A673 (cell line): ENCODE measurements at regions of chr1 and their contacts with region 1.

Region 1: GRCh38 chr1:114152508-114153260 is 985 bp downstream of the SYT6 start:
- DNase-seq: peak; percentile 74
- H3K4me3 ChIP-seq: peak overlapping the region; percentile 82
- H3K27ac ChIP-seq: peak overlapping the region; percentile 92
- H3K4me1 ChIP-seq: peaks cover 36% of the 10 kb centered on the region
- H3K27me3 ChIP-seq: no peaks in the 10 kb centered on the region
- CTCF ChIP-seq: no peak

Region 2: DNA sequence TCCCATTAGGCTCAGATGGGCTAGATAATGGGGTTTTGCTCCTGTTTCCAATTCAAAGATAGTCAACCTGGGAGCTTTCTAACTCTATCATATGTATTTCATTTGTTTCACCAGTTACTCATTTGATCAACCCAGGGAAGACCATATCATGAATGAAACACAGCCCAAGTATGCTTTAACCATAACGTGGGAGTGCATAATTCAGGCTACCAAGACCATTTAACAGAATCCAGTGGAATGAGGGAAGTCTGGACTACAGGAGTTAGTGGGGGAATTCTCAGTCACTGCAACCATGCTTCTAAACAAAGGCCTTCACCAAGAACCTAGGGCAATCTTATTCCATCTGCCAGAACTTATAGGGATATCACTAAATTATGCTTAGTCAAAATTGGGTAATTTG is 1181.7 kb before region 1 on chr1:
- CTCF ChIA-PET with region 1: no interaction called
- POLR2A ChIA-PET with region 1: interaction called, 10 read pairs
- intact Hi-C with region 1: no loop called
- DNase-seq: no peak
- H3K4me3 ChIP-seq: no peak overlapping the region
- H3K27ac ChIP-seq: no peak overlapping the region
- H3K4me1 ChIP-seq: no peaks in the 10 kb centered on the region
- H3K27me3 ChIP-seq: no peaks in the 10 kb centered on the region
- CTCF ChIP-seq: no peak

Region 3: DNA sequence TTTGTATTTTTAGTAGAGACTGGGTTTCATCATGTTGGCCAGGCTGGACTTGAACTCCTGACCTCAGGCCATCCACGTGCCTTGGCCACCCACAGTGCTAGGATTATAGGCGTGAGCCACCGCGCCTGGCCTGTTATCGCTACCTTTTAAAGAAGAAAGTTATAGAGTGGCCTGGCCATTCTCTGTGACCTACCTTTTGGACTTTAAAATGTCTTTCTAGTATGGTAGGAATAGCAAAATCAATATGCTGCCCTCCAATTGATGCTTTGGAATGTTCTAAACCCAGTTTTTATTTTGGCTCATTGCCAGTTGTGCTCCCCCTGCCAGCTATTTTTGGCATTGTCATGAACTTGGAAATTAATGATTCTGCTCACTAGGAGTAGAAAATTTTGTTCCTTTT is 203.7 kb before region 1 on chr1:
- CTCF ChIA-PET with region 1: no interaction called
- POLR2A ChIA-PET with region 1: interaction called, 11 read pairs
- intact Hi-C with region 1: no loop called
- DNase-seq: peak; percentile 57
- H3K4me3 ChIP-seq: no peak overlapping the region
- H3K27ac ChIP-seq: peak overlapping the region; percentile 62
- H3K4me1 ChIP-seq: peaks cover 43% of the 10 kb centered on the region
- H3K27me3 ChIP-seq: no peaks in the 10 kb centered on the region
- CTCF ChIP-seq: peak; percentile 56

Region 4: GRCh38 chr1:114093624-114094376 is 58.9 kb before region 1 on chr1:
- CTCF ChIA-PET with region 1: no interaction called
- POLR2A ChIA-PET with region 1: no interaction called
- intact Hi-C with region 1: no loop called
- DNase-seq: no peak
- H3K4me3 ChIP-seq: no peak overlapping the region
- H3K27ac ChIP-seq: no peak overlapping the region
- H3K4me1 ChIP-seq: peaks cover 12% of the 10 kb centered on the region
- H3K27me3 ChIP-seq: no peaks in the 10 kb centered on the region
- CTCF ChIP-seq: no peak

Region 5: GRCh38 chr1:114196618-114197502 is 44.2 kb after region 1 on chr1:
- CTCF ChIA-PET with region 1: interaction called, 4 read pairs
- POLR2A ChIA-PET with region 1: interaction called, 3 read pairs
- intact Hi-C with region 1: loop called (anchors 1 kb)
- DNase-seq: peak; percentile 96
- H3K4me3 ChIP-seq: no peak overlapping the region
- H3K27ac ChIP-seq: peak overlapping the region; percentile 99
- H3K4me1 ChIP-seq: peaks cover 63% of the 10 kb centered on the region
- H3K27me3 ChIP-seq: no peaks in the 10 kb centered on the region
- CTCF ChIP-seq: no peak